Activated CD4-positive, alpha-beta T cell treated with anti-CD3 and anti-CD28 coated beads for 36 hours (primary cell): ENCODE measurements at regions of chr21 and their contacts with region 1.

Region 1: GRCh38 chr21:42641311-42642218 is 11.9 kb upstream of the PDE9A start:
- DNase-seq: no peak
- ATAC-seq: no peak
- H3K4me3 Mint-ChIP-seq: no peak overlapping the region
- H3K27ac Mint-ChIP-seq: no peak overlapping the region
- H3K4me1 Mint-ChIP-seq: no peaks in the 10 kb centered on the region
- H3K27me3 Mint-ChIP-seq: peaks cover 5% of the 10 kb centered on the region

Region 2: DNA sequence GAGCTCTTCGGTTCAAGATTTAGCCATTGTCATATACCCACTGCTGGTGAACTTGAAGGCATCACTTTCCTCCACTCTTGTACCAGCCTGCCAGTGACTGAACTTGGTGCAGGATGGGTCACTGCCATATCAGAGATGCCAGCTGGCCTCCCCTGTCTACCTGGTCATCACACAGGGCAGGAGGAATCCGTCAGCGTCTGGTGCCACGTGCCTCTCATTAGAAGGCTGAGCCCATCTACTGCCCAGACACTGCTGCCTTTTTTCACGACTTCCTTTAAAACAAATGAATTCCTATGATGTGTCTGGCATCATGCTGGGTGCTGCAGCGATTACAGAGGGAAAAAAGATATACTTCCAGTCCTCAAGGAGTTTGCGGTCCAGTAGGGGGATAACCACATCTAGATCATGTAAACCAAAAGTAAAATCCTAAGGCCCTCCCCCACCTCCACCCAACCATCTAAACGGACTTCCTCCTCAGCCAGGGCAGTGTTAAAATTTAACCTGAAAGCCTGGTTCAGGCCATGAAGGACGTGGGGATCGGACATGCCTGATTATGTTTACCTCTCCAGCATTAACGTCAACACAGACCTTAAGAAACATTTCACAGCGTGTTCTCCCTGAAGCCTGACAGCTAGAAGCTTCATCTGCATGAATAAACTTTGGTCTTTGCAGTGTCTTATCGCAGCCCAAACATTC is 17.3 kb before region 1 on chr21:
- CTCF ChIA-PET with region 1: no interaction called
- POLR2A ChIA-PET with region 1: no interaction called
- intact Hi-C with region 1: loop called in 1 of 2 experiments (anchors 2 kb)
- DNase-seq: no peak
- ATAC-seq: no peak
- H3K4me3 Mint-ChIP-seq: no peak overlapping the region
- H3K27ac Mint-ChIP-seq: no peak overlapping the region
- H3K4me1 Mint-ChIP-seq: no peaks in the 10 kb centered on the region
- H3K27me3 Mint-ChIP-seq: no peaks in the 10 kb centered on the region

Region 3: GRCh38 chr21:42705746-42706374 is 64.3 kb after region 1 on chr21:
- CTCF ChIA-PET with region 1: no interaction called
- POLR2A ChIA-PET with region 1: no interaction called
- intact Hi-C with region 1: loop called in 1 of 2 experiments (anchors 10 kb)
- DNase-seq: no peak
- ATAC-seq: no peak
- H3K4me3 Mint-ChIP-seq: no peak overlapping the region
- H3K27ac Mint-ChIP-seq: no peak overlapping the region
- H3K4me1 Mint-ChIP-seq: no peaks in the 10 kb centered on the region
- H3K27me3 Mint-ChIP-seq: no peaks in the 10 kb centered on the region